ENCODE measurements at regions of chr5 and their contacts with region 1.

Region 1: DNA sequence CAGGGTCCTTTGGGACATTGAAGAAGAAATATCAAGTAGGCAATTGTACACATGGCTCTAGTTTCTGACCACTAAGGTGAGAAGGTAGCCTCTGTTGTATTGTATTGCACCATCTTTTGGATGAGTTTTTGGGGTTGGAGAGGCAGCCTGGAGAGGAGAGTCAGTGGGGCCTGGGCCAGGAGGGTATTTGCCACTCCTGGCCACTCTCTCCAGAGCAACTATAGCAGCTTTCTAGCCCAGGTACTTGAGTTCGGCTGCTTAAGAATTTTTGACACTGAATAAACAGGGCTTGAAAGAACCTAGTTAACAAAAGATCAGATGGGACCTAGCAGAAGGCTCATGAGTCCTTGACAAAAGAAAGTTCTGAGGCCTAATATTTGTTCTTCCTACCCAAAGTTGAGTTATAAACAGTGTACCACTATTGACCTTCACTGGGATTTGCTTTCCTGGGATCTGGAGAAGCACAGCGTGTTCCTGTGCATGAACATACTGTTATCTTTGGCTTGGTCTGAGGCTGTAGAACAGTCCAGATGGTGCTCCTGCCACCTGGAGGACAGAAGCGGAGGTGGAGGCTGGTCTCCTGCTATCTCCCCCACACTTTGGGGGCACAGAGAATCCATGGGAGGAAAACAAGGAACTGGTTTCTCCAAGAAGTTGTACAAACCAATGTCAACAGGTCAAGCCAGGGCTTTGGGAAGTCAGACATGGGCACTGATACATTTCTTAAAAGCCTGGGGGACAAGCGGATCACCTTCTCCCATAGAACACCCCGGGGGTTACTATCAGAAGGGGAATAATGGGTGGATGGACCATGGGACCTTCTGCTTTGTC is 110.4 kb upstream of the LIFR start:
- DNase-seq: no peak
- ATAC-seq: peak; percentile 87
- H3K4me3 ChIP-seq: no peak overlapping the region
- H3K27ac ChIP-seq: peak overlapping the region; percentile 15 to 86
- H3K4me1 ChIP-seq: peaks cover 0 to 6% of the 10 kb centered on the region in 2 donors
- H3K27me3 ChIP-seq: no peaks in the 10 kb centered on the region

Region 2: GRCh38 chr5:38382898-38383297 is 284.0 kb before region 1 on chr5:
- intact Hi-C with region 1: loop called (anchors 5 kb)
- DNase-seq: peak; percentile 64 to 79
- ATAC-seq: peak; percentile 83
- H3K4me3 ChIP-seq: no peak overlapping the region
- H3K27ac ChIP-seq: no peak overlapping the region
- H3K4me1 ChIP-seq: peaks cover 0 to 2% of the 10 kb centered on the region in 2 donors
- H3K27me3 ChIP-seq: peaks cover 0 to 5% of the 10 kb centered on the region in 2 donors

Region 3: DNA sequence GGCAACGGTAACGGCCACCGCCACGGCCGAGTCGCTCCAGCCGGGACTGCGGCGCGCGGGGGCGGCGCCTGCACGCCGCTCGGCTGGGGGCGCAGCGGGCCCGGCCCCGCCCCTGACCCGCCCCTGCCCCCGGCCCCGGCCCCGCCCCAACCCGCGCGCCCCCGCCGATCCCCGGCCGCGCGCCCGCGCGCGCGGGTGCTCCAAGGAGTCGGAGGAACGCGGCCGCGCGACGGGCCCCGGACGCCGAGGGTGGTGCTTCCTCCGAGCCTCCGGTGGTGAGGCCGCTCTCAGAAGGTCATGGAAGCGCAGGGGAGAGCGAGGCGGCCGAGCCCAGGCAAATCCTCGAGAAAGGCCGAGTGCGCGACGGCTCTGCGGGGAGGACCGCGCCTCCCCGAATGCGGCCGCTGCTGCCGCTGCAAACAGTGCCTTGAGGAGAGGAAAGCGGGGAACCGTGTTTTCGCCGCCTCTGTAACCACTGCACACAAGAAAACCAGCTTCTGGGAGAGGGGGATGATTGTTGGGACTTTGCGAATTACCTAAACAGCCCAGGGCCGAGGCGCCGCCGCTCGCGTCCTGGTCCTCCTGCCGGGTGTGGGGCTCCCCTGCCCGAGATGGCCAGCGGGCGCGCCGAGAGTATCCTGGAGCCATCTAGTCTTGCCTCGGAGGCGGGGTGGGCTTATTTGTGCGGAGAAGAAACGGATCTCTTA is 110.1 kb before region 1 on chr5 and contains the start of gene LIFR:
- intact Hi-C with region 1: loop called (anchors 5 kb)
- DNase-seq: peak; percentile 84 to 93
- ATAC-seq: peak; percentile 91
- H3K4me3 ChIP-seq: peak within 1 kb of the TSS; percentile 51 to 98
- H3K27ac ChIP-seq: peak within 1 kb of the TSS; percentile 59 to 85
- H3K4me1 ChIP-seq: peaks cover 0 to 2% of the 10 kb centered on the region in 2 donors
- H3K27me3 ChIP-seq: no peaks in the 10 kb centered on the region
- total RNA-seq, gene LIFR: 67.6 to 69.6 TPM

Region 4: GRCh38 chr5:38809388-38810359 is 142.8 kb after region 1 on chr5:
- intact Hi-C with region 1: loop called (anchors 5 to 10 kb)
- DNase-seq: peak; percentile 85 to 88
- ATAC-seq: peak; percentile 87
- H3K4me3 ChIP-seq: no peak overlapping the region
- H3K27ac ChIP-seq: no peak overlapping the region
- H3K4me1 ChIP-seq: no peaks in the 10 kb centered on the region
- H3K27me3 ChIP-seq: no peaks in the 10 kb centered on the region